GM12878 (cell line): ENCODE measurements at regions of chr19 and their contacts with region 1.

Region 1: DNA sequence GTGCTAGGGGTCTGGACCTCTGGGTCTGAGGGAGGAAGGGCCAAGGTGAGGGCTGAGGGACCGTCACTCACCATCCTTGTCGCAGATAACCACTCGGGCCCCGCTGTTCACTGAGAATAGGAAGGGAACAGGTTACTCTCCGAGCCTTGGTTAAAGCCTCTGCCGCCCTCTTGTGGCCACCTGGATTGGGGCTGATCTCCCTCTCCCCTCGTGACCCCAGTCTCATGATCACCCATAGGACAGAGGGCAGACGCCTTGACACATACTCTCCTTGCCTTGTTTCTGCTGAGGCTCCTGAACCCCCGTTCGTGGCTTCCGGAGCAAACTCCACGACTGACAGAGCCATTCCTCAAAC is 580 bp downstream of the HSD17B14 start:
- DNase-seq: peak; percentile 82
- ATAC-seq: peak; percentile 97
- H3K4me3 ChIP-seq: peak overlapping the region; percentile 72
- H3K27ac ChIP-seq: 0 out of 2 replicates have a peak overlapping the region, but pooled peaks have one; percentile 14
- H3K4me1 ChIP-seq: peaks cover 15% of the 10 kb centered on the region
- H3K27me3 ChIP-seq: no peaks in the 10 kb centered on the region
- CTCF ChIP-seq: peak; percentile 92 to 98 (median 95)
- EP300 ChIP-seq: no peak
- POLR2A ChIP-seq: peak; percentile 68; the same call in 1 of the 2 replicates
- RAD21 ChIP-seq: peak; percentile 93

Region 2: GRCh38 chr19:48819366-48819816 is 16.3 kb before region 1 on chr19:
- CTCF ChIA-PET with region 1: interaction called, 6 read pairs
- POLR2A ChIA-PET with region 1: interaction called, 6 read pairs
- RAD21 ChIA-PET with region 1: interaction called, 5 read pairs
- SMC1A ChIA-PET with region 1: interaction called, 4 read pairs
- in situ Hi-C with region 1: no loop called
- intact Hi-C with region 1: loop called (anchors 2 kb)
- DNase-seq: no peak
- ATAC-seq: no peak
- H3K4me3 ChIP-seq: no peak overlapping the region
- H3K27ac ChIP-seq: no peak overlapping the region
- H3K4me1 ChIP-seq: peaks cover 12% of the 10 kb centered on the region; the same call in 1 of the 2 replicates
- H3K27me3 ChIP-seq: no peaks in the 10 kb centered on the region
- CTCF ChIP-seq: no peak
- EP300 ChIP-seq: no peak
- POLR2A ChIP-seq: no peak
- RAD21 ChIP-seq: no peak

Region 3: DNA sequence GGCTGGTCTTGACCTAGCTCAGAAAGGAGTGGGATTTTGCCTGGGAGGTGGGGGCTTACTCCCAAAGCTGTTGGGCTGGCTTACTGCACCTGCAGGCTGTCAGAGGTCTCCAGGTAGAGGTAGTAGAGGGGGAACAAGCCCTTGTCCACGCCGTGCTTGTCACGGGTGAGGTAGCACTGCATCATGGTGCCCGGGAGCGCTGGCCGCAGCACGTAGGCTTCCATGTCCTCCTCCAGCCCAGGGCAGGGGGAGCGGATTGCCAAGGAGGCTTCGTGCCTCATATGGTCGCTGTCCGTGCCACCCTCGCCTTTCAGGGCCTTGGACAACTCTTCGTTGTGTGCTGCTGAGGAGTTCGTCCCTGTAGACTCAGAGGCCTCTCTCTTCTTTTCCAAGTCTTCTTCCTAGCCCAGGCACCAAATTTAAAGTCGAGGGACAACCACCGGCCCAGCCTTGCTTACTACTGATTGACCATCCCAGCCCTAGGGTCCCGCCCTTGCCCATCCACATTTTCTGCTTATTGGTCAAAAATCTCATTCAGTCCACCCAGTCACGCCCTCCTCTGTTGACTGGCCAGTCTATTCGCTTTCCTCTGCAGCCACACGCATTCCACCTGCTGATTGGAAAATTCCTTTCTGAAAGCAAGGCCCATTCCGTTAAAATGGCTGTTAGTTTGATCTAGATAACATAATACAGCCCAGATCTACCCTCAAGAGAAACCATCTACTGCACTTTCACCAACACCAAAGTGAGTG is 52.3 kb after region 1 on chr19:
- CTCF ChIA-PET with region 1: no interaction called
- POLR2A ChIA-PET with region 1: no interaction called
- RAD21 ChIA-PET with region 1: no interaction called
- SMC1A ChIA-PET with region 1: no interaction called
- in situ Hi-C with region 1: no loop called
- intact Hi-C with region 1: no loop called
- DNase-seq: no peak
- ATAC-seq: no peak
- H3K4me3 ChIP-seq: no peak overlapping the region
- H3K27ac ChIP-seq: no peak overlapping the region
- H3K4me1 ChIP-seq: peaks cover 10% of the 10 kb centered on the region
- H3K27me3 ChIP-seq: no peaks in the 10 kb centered on the region
- CTCF ChIP-seq: no peak
- EP300 ChIP-seq: no peak
- POLR2A ChIP-seq: no peak
- RAD21 ChIP-seq: no peak

Region 4: GRCh38 chr19:48970923-48971395 is 135.2 kb after region 1 on chr19:
- CTCF ChIA-PET with region 1: interaction called, 113 read pairs
- POLR2A ChIA-PET with region 1: interaction called, 7 read pairs
- RAD21 ChIA-PET with region 1: interaction called, 14 read pairs
- SMC1A ChIA-PET with region 1: interaction called, 8 read pairs
- in situ Hi-C with region 1: no loop called
- intact Hi-C with region 1: loop called (anchors 1 kb)
- DNase-seq: no peak
- ATAC-seq: peak; percentile 85
- H3K4me3 ChIP-seq: no peak overlapping the region
- H3K27ac ChIP-seq: 0 out of 2 replicates have a peak overlapping the region, but pooled peaks have one; percentile 13
- H3K4me1 ChIP-seq: peaks cover 17% of the 10 kb centered on the region
- H3K27me3 ChIP-seq: no peaks in the 10 kb centered on the region
- CTCF ChIP-seq: peak; percentile 92 to 97 (median 94)
- EP300 ChIP-seq: no peak
- POLR2A ChIP-seq: no peak
- RAD21 ChIP-seq: peak; percentile 86